Right ventricle myocardium superior (tissue), 1 donor: ENCODE measurements at regions of chr11 and their contacts with region 1.

Region 1: DNA sequence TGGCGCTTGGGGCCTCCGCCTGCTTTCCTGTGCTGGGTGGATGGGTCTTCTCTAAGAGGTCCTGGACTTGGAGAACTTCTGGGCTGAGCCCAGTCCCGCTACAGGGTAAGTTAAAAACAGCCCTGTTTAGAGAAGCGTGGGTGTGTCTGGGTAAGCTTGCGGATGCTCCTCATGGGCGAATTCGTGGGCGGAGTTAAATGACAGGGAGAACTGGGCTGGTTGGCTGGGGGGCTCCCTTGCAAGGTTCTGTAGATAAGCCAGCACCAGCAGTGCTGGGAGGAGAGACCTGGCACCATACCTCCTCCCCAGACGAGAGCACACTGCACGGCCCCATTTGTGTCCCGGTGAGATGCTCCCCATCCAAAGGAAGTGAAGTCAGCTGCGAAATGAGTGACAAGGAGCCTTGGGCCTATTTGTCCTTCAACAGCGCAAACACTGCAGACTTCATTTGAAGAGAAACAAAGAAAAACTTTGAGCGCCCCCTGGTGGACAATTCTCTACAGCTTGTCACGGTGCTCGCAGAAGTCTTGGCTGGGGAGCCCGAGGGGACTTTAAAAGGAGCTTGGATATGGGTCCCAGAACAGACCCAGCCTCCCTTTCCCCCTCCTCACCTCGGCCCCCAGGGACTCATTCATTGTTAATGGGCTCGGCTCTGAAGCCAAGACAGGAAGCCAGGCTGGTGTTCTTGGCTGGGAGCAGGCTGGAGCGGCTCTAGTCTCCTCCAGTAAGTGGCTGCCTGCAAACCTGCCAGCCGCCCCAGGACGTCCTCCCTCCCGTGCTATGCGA is 39.5 kb downstream of the TP53I11 start:
- DNase-seq: peak; percentile 75
- ATAC-seq: peak; percentile 88

Region 2: DNA sequence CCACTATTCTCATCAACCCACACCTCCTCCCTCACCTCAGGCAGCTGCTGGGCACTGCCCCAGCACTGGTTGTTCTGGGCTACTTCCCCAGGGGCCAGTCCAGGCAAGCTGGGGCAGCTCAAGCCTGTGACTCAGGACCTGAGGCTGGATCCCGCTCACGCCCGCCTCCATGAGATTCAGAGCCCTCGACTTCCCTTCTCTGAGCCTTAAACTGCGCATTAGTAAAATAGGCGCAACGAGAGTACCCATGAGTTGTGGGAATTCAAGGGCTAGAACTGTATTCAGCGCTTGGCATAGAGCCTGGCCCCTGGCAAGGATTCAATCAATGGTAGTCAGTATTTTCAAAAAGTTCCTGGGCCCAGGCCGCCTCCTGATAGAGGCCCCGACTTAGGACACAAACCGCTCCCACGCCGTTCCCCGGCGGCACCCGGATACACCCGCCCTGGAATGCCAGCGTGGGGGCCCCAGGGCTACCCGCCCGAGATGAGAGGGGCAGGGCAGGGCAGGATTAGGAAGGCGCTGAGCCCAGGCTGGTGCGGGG is 346.5 kb before region 1 on chr11:
- intact Hi-C with region 1: loop called (anchors 5 kb)
- DNase-seq: peak; percentile 91
- ATAC-seq: peak; percentile 72

Region 3: GRCh38 chr11:44964526-44965209 is 53.4 kb after region 1 on chr11:
- intact Hi-C with region 1: no loop called
- DNase-seq: no peak
- ATAC-seq: no peak